Activated CD8-positive, alpha-beta T cell treated with anti-CD3 and anti-CD28 coated beads for 36 hours (primary cell): ENCODE measurements at regions of chr10 and their contacts with region 1.

Region 1: GRCh38 chr10:48656241-48656913 is 28.3 kb upstream of the WDFY4 start:
- DNase-seq: peak; percentile 92
- ATAC-seq: peak; percentile 96
- H3K4me3 Mint-ChIP-seq: peak overlapping the region; percentile 63
- H3K27ac Mint-ChIP-seq: no peak overlapping the region
- H3K4me1 Mint-ChIP-seq: peaks cover 7% of the 10 kb centered on the region
- H3K27me3 Mint-ChIP-seq: peaks cover 18% of the 10 kb centered on the region
- CTCF ChIP-seq: peak; percentile 99

Region 2: DNA sequence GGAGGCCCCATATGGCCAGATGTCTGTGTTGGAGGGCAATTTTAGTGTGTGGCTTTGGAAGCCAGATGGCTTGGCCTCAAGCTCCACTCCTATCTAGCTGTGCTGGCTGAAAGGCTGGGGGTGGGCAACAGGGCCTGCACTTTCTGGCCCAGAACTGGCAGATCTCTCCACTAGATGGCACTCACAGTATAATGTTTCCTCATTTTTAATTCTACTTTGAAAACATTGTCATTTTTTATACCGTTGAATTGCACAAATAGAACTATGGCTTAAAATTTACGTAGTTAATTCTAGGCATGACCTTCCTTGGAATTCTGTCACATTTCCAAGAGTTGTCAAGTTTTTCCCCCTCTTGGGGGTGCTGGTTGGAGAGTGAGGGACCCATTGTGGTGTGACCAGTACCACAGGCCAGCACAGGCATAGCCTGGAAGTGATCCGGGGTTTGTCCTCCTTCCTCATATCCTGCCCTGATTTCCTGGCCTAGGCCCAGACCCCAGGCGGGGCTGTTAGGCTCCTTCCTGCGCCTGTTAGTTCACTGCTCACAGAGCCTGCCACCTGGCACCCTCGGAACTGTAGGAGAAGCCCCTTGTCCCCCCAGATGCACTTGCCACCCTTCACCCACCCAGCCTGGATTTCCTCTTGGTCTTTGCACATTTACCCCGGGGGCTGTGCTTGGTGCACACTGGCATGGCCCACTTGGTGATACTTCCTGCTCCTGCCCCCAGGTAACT is 104.4 kb before region 1 on chr10:
- CTCF ChIA-PET with region 1: interaction called, 86 read pairs
- POLR2A ChIA-PET with region 1: no interaction called
- intact Hi-C with region 1: loop called (anchors 2 kb)
- DNase-seq: peak; percentile 54
- ATAC-seq: no peak
- H3K4me3 Mint-ChIP-seq: no peak overlapping the region
- H3K27ac Mint-ChIP-seq: no peak overlapping the region
- H3K4me1 Mint-ChIP-seq: no peaks in the 10 kb centered on the region
- H3K27me3 Mint-ChIP-seq: no peaks in the 10 kb centered on the region
- CTCF ChIP-seq: peak; percentile 70

Region 3: GRCh38 chr10:48614481-48615390 is 41.6 kb before region 1 on chr10:
- CTCF ChIA-PET with region 1: interaction called, 91 read pairs
- POLR2A ChIA-PET with region 1: no interaction called
- intact Hi-C with region 1: no loop called
- DNase-seq: no peak
- ATAC-seq: no peak
- H3K4me3 Mint-ChIP-seq: no peak overlapping the region
- H3K27ac Mint-ChIP-seq: no peak overlapping the region
- H3K4me1 Mint-ChIP-seq: no peaks in the 10 kb centered on the region
- H3K27me3 Mint-ChIP-seq: peaks cover 12% of the 10 kb centered on the region
- CTCF ChIP-seq: peak; percentile 27

Region 4: DNA sequence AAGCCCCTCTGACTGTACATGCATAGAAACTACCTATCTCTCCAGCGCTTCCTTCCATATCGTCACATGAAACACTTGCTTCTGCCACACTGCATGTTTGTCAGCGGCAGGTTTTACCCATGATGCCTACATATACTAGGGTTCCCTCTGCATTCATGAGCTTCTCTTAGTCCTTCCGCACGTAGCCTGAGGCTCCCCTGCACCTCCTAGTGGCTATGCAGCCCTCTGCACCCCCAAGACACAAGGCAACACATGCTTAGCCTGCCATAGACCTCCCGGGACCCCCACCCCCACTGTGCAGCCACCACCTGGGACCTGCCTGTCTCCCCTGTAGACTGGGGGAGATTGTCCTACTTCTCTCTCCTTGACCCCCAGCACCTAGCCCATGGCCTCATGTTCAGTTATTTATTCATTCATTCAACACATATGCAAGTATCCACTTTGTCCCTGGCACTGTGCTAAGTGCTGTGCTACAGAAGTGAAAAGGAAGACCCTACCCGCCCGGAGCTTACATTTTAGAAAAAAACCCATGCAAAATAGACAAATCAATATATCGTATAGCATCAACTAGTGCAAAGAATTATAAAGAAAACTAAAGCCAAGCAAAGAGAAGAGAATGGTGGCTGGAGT is 508.3 kb after region 1 on chr10:
- CTCF ChIA-PET with region 1: interaction called, 10 read pairs
- POLR2A ChIA-PET with region 1: no interaction called
- intact Hi-C with region 1: no loop called
- DNase-seq: peak; percentile 66
- ATAC-seq: peak; percentile 96
- H3K4me3 Mint-ChIP-seq: no peak overlapping the region
- H3K27ac Mint-ChIP-seq: no peak overlapping the region
- H3K4me1 Mint-ChIP-seq: peaks cover 12% of the 10 kb centered on the region
- H3K27me3 Mint-ChIP-seq: no peaks in the 10 kb centered on the region
- CTCF ChIP-seq: peak; percentile 64